ENCODE measurements at regions of chr15 and their contacts with region 1.

Region 1: GRCh38 chr15:60179786-60180391 is 175.8 kb downstream of the FOXB1 start:
- DNase-seq: peak; percentile 21
- CTCF ChIP-seq: peak; percentile 79

Region 2: GRCh38 chr15:60070838-60071493 is 108.9 kb before region 1 on chr15:
- CTCF ChIA-PET with region 1: no interaction called
- POLR2A ChIA-PET with region 1: no interaction called
- DNase-seq: no peak
- CTCF ChIP-seq: no peak

Region 3: GRCh38 chr15:60204131-60204885 is 24.4 kb after region 1 on chr15:
- CTCF ChIA-PET with region 1: interaction called, 12 read pairs
- POLR2A ChIA-PET with region 1: no interaction called
- DNase-seq: no peak
- CTCF ChIP-seq: no peak

Measured in GM10248 (cell line).